GM10248 (cell line): ENCODE measurements at regions of chr13 and their contacts with region 1.

Region 1: GRCh38 chr13:63636316-63636993 is 2220.8 kb upstream of the PCDH20 start:
- DNase-seq: no peak
- CTCF ChIP-seq: no peak

Region 2: GRCh38 chr13:63625869-63626268 is 10.6 kb before region 1 on chr13:
- CTCF ChIA-PET with region 1: interaction called, 13 read pairs
- POLR2A ChIA-PET with region 1: no interaction called
- DNase-seq: no peak
- CTCF ChIP-seq: no peak

Region 3: DNA sequence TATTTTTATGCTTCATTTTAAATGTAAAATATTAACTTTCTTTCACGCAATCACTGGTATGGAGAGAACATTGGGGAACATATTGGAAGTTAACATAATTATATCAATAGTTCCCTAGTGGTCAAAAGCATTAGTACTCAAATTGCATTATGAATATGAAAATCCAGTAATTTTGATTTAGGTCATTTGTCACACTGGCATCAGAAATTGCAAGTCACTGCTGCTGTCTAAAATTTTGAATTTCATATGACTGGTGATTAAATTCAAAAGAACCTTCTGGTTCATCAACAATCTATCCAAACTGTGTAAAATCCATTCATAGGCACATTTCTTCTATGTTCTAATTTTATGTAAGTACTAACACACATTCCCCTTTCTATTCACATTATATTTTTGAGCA is 14.9 kb after region 1 on chr13:
- CTCF ChIA-PET with region 1: no interaction called
- POLR2A ChIA-PET with region 1: no interaction called
- DNase-seq: no peak
- CTCF ChIP-seq: no peak